ENCODE measurements at regions of chr12 and their contacts with region 1.

Region 1: GRCh38 chr12:125683748-125684381 is 618.6 kb downstream of the AACS start:
- DNase-seq: peak; percentile 80
- ATAC-seq: peak; percentile 80
- H3K4me3 Mint-ChIP-seq: no peak overlapping the region
- H3K27ac Mint-ChIP-seq: no peak overlapping the region
- H3K4me1 Mint-ChIP-seq: no peaks in the 10 kb centered on the region
- H3K27me3 Mint-ChIP-seq: no peaks in the 10 kb centered on the region

Region 2: GRCh38 chr12:125330645-125331341 is 353.1 kb before region 1 on chr12:
- CTCF ChIA-PET with region 1: no interaction called
- POLR2A ChIA-PET with region 1: no interaction called
- intact Hi-C with region 1: loop called in 1 of 2 experiments (anchors 2 kb)
- DNase-seq: peak; percentile 77
- ATAC-seq: peak; percentile 69
- H3K4me3 Mint-ChIP-seq: no peak overlapping the region
- H3K27ac Mint-ChIP-seq: no peak overlapping the region
- H3K4me1 Mint-ChIP-seq: no peaks in the 10 kb centered on the region
- H3K27me3 Mint-ChIP-seq: peaks cover 29% of the 10 kb centered on the region

Region 3: DNA sequence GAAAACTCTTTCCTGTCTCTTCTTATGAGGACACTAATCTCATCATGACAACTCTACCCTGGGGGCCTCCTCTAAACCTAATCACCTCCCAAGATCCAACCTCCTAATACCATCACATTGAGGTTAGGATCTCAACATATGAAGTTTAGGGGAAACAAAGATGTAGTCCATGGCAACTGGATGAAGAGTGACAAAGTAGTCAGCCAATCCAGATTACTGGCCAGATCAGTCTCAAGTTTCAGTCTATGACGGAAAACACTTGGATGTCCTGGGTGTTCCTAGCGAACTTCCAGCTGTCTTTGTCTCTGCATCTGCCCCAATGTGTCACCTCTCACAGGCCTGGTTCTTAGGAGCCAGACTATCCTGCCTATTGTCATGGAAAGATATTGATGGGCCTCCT is 12.2 kb after region 1 on chr12:
- CTCF ChIA-PET with region 1: no interaction called
- POLR2A ChIA-PET with region 1: no interaction called
- intact Hi-C with region 1: no loop called
- DNase-seq: no peak
- ATAC-seq: no peak
- H3K4me3 Mint-ChIP-seq: no peak overlapping the region
- H3K27ac Mint-ChIP-seq: no peak overlapping the region
- H3K4me1 Mint-ChIP-seq: no peaks in the 10 kb centered on the region
- H3K27me3 Mint-ChIP-seq: peaks cover 2% of the 10 kb centered on the region

Region 4: DNA sequence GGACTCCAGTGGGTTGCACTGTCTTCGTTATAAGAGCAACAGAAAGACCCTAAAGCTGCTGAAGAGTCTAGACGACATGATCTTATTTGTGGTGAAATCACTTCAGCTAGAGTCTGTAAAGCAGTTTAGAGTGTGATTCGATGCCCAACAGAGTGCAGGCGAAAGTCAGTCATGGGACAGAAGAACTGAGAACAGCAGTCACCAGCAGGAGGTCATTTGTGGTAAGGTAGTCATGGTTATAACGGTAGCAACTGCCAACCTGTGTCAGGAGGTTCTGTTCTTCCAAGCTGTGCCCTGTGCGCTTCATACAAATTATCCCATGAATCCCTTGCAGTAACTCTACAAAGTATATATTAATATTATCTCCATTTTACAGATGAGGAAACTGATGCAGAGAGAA is 335.5 kb after region 1 on chr12:
- CTCF ChIA-PET with region 1: no interaction called
- POLR2A ChIA-PET with region 1: no interaction called
- intact Hi-C with region 1: no loop called
- DNase-seq: no peak
- ATAC-seq: no peak
- H3K4me3 Mint-ChIP-seq: no peak overlapping the region
- H3K27ac Mint-ChIP-seq: no peak overlapping the region
- H3K4me1 Mint-ChIP-seq: no peaks in the 10 kb centered on the region
- H3K27me3 Mint-ChIP-seq: no peaks in the 10 kb centered on the region